ENCODE measurements at regions of chr7 and their contacts with region 1.

Region 1: GRCh38 chr7:107450970-107451369 is 18.9 kb upstream of the GPR22 start:
- DNase-seq: no peak
- H3K4me3 ChIP-seq: no peak overlapping the region
- H3K27ac ChIP-seq: no peak overlapping the region
- H3K4me1 ChIP-seq: no peaks in the 10 kb centered on the region
- H3K27me3 ChIP-seq: no peaks in the 10 kb centered on the region
- CTCF ChIP-seq: no peak
- EP300 ChIP-seq: no peak
- POLR2A ChIP-seq: no peak

Region 2: GRCh38 chr7:107725151-107725740 is 274.3 kb after region 1 on chr7:
- in situ Hi-C with region 1: loop called in 3 of 4 experiments (anchors 10 kb)
- intact Hi-C with region 1: no loop called
- DNase-seq: peak; percentile 39
- H3K4me3 ChIP-seq: no peak overlapping the region
- H3K27ac ChIP-seq: no peak overlapping the region
- H3K4me1 ChIP-seq: no peaks in the 10 kb centered on the region
- H3K27me3 ChIP-seq: peaks cover 12% of the 10 kb centered on the region
- CTCF ChIP-seq: peak; percentile 67 to 78 (median 71)
- EP300 ChIP-seq: no peak
- POLR2A ChIP-seq: no peak

Measured in transverse colon (tissue), 4 donors.